GM12878 (cell line): ENCODE measurements at regions of chr12 and their contacts with region 1.

Region 1: GRCh38 chr12:4552191-4552590 is 9.8 kb upstream of the DYRK4 start:
- DNase-seq: no peak
- ATAC-seq: no peak
- H3K4me3 ChIP-seq: no peak overlapping the region
- H3K27ac ChIP-seq: no peak overlapping the region
- H3K4me1 ChIP-seq: no peaks in the 10 kb centered on the region
- H3K27me3 ChIP-seq: no peaks in the 10 kb centered on the region
- CTCF ChIP-seq: no peak
- EP300 ChIP-seq: no peak
- POLR2A ChIP-seq: no peak
- RAD21 ChIP-seq: no peak

Region 2: GRCh38 chr12:4564818-4565217 is 12.6 kb after region 1 on chr12:
- CTCF ChIA-PET with region 1: interaction called, 10 read pairs
- POLR2A ChIA-PET with region 1: no interaction called
- RAD21 ChIA-PET with region 1: no interaction called
- SMC1A ChIA-PET with region 1: interaction called, 4 read pairs
- in situ Hi-C with region 1: no loop called
- intact Hi-C with region 1: no loop called
- DNase-seq: peak; percentile 20
- ATAC-seq: peak; percentile 76
- H3K4me3 ChIP-seq: no peak overlapping the region
- H3K27ac ChIP-seq: peak overlapping the region; percentile 54; the same call in 1 of the 2 replicates
- H3K4me1 ChIP-seq: peaks cover 28% of the 10 kb centered on the region
- H3K27me3 ChIP-seq: no peaks in the 10 kb centered on the region
- CTCF ChIP-seq: no peak
- EP300 ChIP-seq: no peak
- POLR2A ChIP-seq: no peak
- RAD21 ChIP-seq: no peak